ENCODE measurements at regions of chr1 and their contacts with region 1.

Region 1: DNA sequence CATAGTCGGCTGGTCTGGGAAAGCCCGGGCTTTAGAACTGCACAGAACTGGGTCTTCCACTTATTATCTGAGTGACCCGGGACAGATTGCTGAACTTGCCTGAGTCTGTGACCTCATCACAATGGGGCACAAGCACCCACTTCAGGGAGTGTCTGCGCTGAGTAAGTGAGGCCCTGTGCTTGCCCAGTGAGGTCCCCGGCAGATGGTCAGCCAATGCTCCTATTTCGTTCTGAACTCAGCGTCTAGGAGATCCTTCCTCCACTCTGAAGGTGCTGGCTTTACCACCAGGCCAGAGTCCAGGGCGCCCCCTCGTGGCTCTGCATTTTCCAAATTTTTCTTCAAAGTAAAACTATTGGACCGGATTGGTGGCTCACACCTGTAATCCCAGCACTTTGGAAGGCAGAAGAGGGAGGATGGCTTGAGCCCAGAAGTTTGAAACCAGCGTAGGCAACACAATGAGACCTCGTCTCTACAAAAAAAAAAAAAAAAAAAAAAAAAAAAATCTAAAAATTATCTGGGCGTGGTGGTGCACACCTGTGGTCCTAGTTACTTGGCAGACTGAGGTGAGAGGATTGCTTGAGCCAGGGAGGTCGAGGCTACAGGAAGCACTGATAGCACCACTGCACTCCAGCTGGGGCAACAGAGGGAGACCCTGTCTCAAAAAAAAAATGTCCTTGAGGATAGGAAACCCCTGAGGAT is 61.7 kb downstream of the FCRL5 start:
- DNase-seq: peak; percentile 43
- ATAC-seq: peak; percentile 79
- H3K4me3 ChIP-seq: no peak overlapping the region
- H3K27ac ChIP-seq: no peak overlapping the region
- H3K4me1 ChIP-seq: no peaks in the 10 kb centered on the region
- H3K27me3 ChIP-seq: no peaks in the 10 kb centered on the region
- CTCF ChIP-seq: peak; percentile 74
- EP300 ChIP-seq: no peak
- POLR2A ChIP-seq: no peak
- RAD21 ChIP-seq: peak; percentile 26; the same call in 1 of the 2 replicates

Region 2: GRCh38 chr1:157193702-157194391 is 296.8 kb before region 1 on chr1:
- CTCF ChIA-PET with region 1: interaction called, 12 read pairs
- POLR2A ChIA-PET with region 1: no interaction called
- in situ Hi-C with region 1: loop called (anchors 5 kb)
- intact Hi-C with region 1: loop called (anchors 1 kb)
- DNase-seq: peak; percentile 47
- ATAC-seq: peak; percentile 60
- H3K4me3 ChIP-seq: no peak overlapping the region
- H3K27ac ChIP-seq: no peak overlapping the region
- H3K4me1 ChIP-seq: peaks cover 16% of the 10 kb centered on the region; the same call in 1 of the 2 replicates
- H3K27me3 ChIP-seq: peaks cover 2 to 18% of the 10 kb centered on the region in 2 experiments; a peak in 4 of 5 replicates
- CTCF ChIP-seq: peak; percentile 79
- EP300 ChIP-seq: no peak
- POLR2A ChIP-seq: no peak
- RAD21 ChIP-seq: peak; percentile 62

Region 3: GRCh38 chr1:157363660-157364140 is 126.9 kb before region 1 on chr1:
- CTCF ChIA-PET with region 1: interaction called, 31 read pairs
- POLR2A ChIA-PET with region 1: no interaction called
- in situ Hi-C with region 1: no loop called
- intact Hi-C with region 1: no loop called
- DNase-seq: peak; percentile 41
- ATAC-seq: peak; percentile 99
- H3K4me3 ChIP-seq: no peak overlapping the region
- H3K27ac ChIP-seq: no peak overlapping the region
- H3K4me1 ChIP-seq: peaks cover 7% of the 10 kb centered on the region; the same call in 1 of the 2 replicates
- H3K27me3 ChIP-seq: no peaks in the 10 kb centered on the region
- CTCF ChIP-seq: peak; percentile 75
- EP300 ChIP-seq: no peak
- POLR2A ChIP-seq: no peak
- RAD21 ChIP-seq: no peak

Region 4: DNA sequence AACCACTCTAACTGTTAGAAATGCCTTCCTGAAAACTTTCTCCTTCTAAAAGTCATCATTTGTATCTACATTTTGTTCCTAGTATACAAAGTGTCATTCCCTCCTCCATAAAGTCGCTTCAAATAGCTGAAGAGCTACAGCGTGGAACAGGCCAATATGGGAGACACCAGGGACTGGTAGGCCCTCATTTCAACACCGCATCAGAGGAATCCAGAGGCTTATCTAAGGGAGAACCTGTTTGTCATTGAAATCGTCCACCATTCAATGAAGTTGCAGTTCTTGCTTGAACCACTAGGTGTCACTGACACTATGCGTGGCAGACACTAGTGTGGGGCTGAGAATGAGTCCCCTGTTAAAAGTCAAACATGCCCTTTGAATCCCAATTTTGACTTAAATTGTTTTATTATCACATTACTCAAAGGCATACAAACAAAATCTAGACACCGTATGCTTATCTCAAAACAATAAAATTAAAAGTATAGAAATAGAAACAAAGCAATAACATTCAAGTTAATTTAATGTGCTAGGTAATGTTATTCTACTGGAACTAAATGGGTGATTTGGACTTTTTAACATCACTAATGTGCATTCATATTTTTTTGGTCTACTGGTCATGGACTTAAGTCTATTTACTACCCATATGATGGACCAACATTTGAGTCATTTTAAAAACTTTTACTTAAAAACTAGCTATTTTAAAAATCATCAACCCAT is 120.7 kb before region 1 on chr1:
- CTCF ChIA-PET with region 1: interaction called, 31 read pairs
- POLR2A ChIA-PET with region 1: no interaction called
- in situ Hi-C with region 1: loop called (anchors 5 kb)
- intact Hi-C with region 1: no loop called
- DNase-seq: peak; percentile 52
- ATAC-seq: peak; percentile 89
- H3K4me3 ChIP-seq: no peak overlapping the region
- H3K27ac ChIP-seq: no peak overlapping the region
- H3K4me1 ChIP-seq: peaks cover 7% of the 10 kb centered on the region; the same call in 1 of the 2 replicates
- H3K27me3 ChIP-seq: no peaks in the 10 kb centered on the region
- CTCF ChIP-seq: peak; percentile 82
- EP300 ChIP-seq: no peak
- POLR2A ChIP-seq: no peak
- RAD21 ChIP-seq: peak; percentile 45; the same call in 1 of the 2 replicates

Region 5: GRCh38 chr1:157380523-157380922 is 110.1 kb before region 1 on chr1:
- CTCF ChIA-PET with region 1: interaction called, 36 read pairs
- POLR2A ChIA-PET with region 1: no interaction called
- in situ Hi-C with region 1: loop called (anchors 5 kb)
- intact Hi-C with region 1: loop called (anchors 1 kb)
- DNase-seq: no peak
- ATAC-seq: no peak
- H3K4me3 ChIP-seq: no peak overlapping the region
- H3K27ac ChIP-seq: no peak overlapping the region
- H3K4me1 ChIP-seq: no peaks in the 10 kb centered on the region
- H3K27me3 ChIP-seq: no peaks in the 10 kb centered on the region
- CTCF ChIP-seq: no peak
- EP300 ChIP-seq: no peak
- POLR2A ChIP-seq: no peak
- RAD21 ChIP-seq: no peak

Region 6: DNA sequence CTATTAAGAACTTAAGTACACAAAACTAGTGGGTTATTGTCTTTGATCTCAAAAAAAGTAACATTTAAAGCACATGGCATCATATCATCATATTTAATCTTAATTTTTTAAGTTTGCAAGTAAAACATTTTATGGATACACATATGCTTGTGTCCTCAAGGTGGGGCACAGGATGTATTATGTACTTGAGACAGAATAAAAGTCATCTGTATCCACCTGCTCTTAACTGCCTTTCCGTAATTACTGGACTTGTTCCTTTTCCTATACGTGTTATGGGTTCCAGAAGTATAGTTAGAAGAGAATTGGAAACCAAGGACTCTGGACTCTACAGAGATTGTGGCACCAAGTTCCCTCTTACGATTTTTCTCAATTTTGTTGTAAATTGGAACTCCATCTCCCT is 17.7 kb before region 1 on chr1:
- CTCF ChIA-PET with region 1: no interaction called
- POLR2A ChIA-PET with region 1: no interaction called
- in situ Hi-C with region 1: no loop called
- intact Hi-C with region 1: loop called (anchors 1 kb)
- DNase-seq: no peak
- ATAC-seq: no peak
- H3K4me3 ChIP-seq: no peak overlapping the region
- H3K27ac ChIP-seq: no peak overlapping the region
- H3K4me1 ChIP-seq: no peaks in the 10 kb centered on the region
- H3K27me3 ChIP-seq: no peaks in the 10 kb centered on the region
- CTCF ChIP-seq: no peak
- EP300 ChIP-seq: no peak
- POLR2A ChIP-seq: no peak
- RAD21 ChIP-seq: no peak